ENCODE measurements at regions of chr4 and their contacts with region 1.

Region 1: DNA sequence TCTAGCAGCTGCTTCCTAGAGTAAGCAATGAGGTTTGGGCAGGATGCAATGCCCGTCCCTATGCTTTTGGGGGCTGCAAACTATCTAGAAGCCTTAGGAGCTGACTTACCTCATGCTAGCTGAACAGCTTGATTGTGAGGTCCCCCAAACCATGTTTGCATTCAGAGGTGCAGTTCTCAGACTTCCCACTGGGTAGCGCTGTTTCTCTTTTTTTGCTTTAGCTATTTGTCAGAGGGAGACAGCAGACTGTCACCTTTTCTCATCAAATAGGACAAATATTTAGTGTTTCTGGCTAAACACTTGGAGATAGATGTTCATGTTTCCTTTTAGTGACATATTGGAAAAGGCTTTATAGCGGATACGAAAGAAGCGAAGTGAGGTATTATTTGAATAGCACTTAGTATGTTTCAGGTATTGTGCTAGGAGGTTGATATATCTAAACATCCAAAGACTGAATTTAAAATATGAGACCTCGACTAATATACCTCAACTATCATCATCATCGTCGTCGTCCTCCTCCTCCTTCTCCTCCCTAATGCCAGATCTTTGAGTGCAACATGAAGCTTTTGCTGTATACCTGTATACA is 18.7 kb upstream of the TMEM192 start:
- DNase-seq: peak; percentile 51
- ATAC-seq: peak; percentile 85
- H3K4me3 Mint-ChIP-seq: no peak overlapping the region
- H3K27ac Mint-ChIP-seq: no peak overlapping the region
- H3K4me1 Mint-ChIP-seq: peaks cover 40% of the 10 kb centered on the region
- H3K27me3 Mint-ChIP-seq: no peaks in the 10 kb centered on the region
- CTCF ChIP-seq: peak; percentile 77

Region 2: GRCh38 chr4:165118256-165118909 is 13.0 kb before region 1 on chr4:
- CTCF ChIA-PET with region 1: interaction called, 24 read pairs
- POLR2A ChIA-PET with region 1: interaction called, 6 read pairs
- intact Hi-C with region 1: loop called (anchors 1 kb)
- DNase-seq: no peak
- ATAC-seq: no peak
- H3K4me3 Mint-ChIP-seq: no peak overlapping the region
- H3K27ac Mint-ChIP-seq: no peak overlapping the region
- H3K4me1 Mint-ChIP-seq: peaks cover 2% of the 10 kb centered on the region
- H3K27me3 Mint-ChIP-seq: peaks cover 8% of the 10 kb centered on the region
- CTCF ChIP-seq: no peak

Region 3: GRCh38 chr4:165327211-165328100 is 196.1 kb after region 1 on chr4 and contains the start of gene MSMO1:
- CTCF ChIA-PET with region 1: interaction called, 7 read pairs
- POLR2A ChIA-PET with region 1: interaction called, 5 read pairs
- intact Hi-C with region 1: loop called (anchors 1 kb)
- DNase-seq: peak; percentile 92
- ATAC-seq: peak; percentile 96
- H3K4me3 Mint-ChIP-seq: no peak within 1 kb of the TSS
- H3K27ac Mint-ChIP-seq: no peak within 1 kb of the TSS
- H3K4me1 Mint-ChIP-seq: peaks cover 40% of the 10 kb centered on the region
- H3K27me3 Mint-ChIP-seq: no peaks in the 10 kb centered on the region
- CTCF ChIP-seq: no peak
- total RNA-seq, gene MSMO1: 74.6 and 87.9 TPM in 2 replicates

Region 4: DNA sequence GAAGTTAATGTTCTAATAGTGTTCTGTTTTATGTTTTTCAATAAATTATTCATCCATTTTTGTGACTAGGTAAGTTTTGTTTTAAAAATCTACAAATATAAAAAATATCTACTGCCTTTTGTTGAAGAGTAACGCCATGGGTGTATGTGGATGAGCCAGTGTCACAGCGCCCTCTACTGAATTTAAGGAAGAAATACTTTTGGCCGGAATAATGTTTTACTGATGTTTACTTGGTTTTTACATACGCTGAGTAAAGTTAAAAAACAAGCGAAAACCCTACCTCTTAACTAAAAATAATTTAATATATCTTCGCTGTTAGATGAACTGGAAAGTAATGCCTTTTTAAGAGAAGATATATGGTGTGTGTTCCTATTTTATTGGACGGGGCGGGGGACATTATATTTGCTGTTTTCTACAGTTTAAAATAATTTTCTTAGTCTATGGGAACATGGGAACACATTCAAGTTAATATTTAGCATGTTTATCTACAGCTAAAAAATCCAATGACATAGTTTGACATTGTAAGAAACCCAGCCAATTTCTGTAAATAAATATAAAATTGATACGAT is 333.6 kb after region 1 on chr4:
- CTCF ChIA-PET with region 1: interaction called, 58 read pairs
- POLR2A ChIA-PET with region 1: no interaction called
- intact Hi-C with region 1: loop called (anchors 1 kb)
- DNase-seq: no peak
- ATAC-seq: peak; percentile 45
- H3K4me3 Mint-ChIP-seq: no peak overlapping the region
- H3K27ac Mint-ChIP-seq: no peak overlapping the region
- H3K4me1 Mint-ChIP-seq: no peaks in the 10 kb centered on the region
- H3K27me3 Mint-ChIP-seq: peaks cover 4% of the 10 kb centered on the region
- CTCF ChIP-seq: peak; percentile 80

Region 5: DNA sequence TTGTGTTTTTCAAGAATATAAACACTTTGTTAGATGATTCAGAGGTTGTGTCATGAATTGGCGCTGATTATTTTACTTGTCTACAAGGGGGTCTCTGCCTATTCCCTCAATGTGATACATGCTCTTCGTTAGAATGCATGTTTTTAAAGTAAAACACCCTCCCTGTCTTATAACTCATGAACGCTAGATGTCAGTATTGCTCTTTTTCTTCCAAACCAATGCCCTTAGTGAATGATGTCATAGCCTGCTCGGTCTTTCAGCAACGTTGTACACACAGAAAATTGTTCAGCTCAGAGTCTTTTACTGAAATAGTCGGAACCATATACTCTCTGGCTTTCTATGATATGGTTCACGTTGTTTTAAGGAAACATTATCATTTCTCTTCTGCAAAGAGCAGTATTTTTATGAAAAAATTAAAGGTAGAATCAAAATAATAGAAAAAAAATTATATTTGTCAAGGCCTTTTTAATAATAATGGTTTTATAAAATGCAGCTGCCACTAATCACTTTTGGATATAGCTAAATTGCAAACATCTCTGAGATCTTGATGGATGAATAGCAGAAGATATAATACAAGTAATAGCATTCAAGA is 1034.6 kb after region 1 on chr4:
- CTCF ChIA-PET with region 1: no interaction called
- POLR2A ChIA-PET with region 1: no interaction called
- intact Hi-C with region 1: loop called (anchors 10 kb)
- DNase-seq: no peak
- ATAC-seq: peak; percentile 60
- H3K4me3 Mint-ChIP-seq: no peak overlapping the region
- H3K27ac Mint-ChIP-seq: no peak overlapping the region
- H3K4me1 Mint-ChIP-seq: no peaks in the 10 kb centered on the region
- H3K27me3 Mint-ChIP-seq: no peaks in the 10 kb centered on the region
- CTCF ChIP-seq: no peak